Panc1 (cell line): ENCODE measurements at regions of chr15 and their contacts with region 1.

Region 1: DNA sequence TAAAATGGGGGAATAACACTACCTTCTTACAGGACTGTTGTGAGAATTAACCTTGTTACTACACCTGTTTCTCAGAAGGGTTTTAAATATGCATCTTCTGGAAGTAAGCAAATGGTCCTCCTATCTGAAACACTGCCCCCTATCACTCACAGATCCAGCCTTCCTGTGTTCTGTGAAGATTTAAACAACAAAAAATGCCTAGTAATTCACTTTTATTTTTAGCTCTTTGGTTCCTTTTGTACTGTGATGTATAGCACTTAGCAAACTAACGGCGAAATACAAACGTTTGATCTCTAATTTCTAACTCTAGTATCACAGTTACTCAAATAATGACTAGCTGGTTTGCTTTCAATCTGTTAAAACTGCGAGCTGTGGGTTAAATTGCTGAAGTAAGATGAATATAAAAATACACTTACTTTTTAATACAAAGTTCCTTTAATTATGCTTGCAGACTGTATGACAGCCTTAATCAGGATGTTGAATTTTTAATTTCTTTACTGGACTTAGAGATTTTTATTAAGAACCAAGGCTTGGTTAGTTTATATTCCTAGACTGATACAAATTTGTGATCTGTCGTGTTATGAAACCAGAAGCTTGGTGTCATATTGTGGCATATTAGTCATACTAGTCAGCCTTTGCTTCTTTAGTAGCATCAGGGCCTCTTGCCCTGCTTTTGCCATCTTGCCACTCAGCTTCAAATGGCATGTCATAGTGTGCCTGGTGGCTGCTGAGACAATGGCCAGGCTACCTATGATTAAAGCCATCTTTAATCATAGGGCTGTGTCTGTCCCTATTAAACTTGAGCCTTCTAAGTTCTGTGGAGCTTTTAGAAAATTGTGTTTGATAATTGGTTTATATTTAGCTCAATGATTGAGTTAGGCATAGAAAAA is 9.2 kb downstream of the EIF3J start:
- DNase-seq: no peak
- ATAC-seq: no peak
- H3K4me3 ChIP-seq: no peak overlapping the region
- H3K27ac ChIP-seq: no peak overlapping the region
- H3K4me1 ChIP-seq: 0 out of 2 replicates have a peak, but pooled peaks cover 6% of the 10 kb centered on the region
- H3K27me3 ChIP-seq: no peaks in the 10 kb centered on the region
- CTCF ChIP-seq: peak; percentile 59; the same call in 1 of the 2 replicates

Region 2: DNA sequence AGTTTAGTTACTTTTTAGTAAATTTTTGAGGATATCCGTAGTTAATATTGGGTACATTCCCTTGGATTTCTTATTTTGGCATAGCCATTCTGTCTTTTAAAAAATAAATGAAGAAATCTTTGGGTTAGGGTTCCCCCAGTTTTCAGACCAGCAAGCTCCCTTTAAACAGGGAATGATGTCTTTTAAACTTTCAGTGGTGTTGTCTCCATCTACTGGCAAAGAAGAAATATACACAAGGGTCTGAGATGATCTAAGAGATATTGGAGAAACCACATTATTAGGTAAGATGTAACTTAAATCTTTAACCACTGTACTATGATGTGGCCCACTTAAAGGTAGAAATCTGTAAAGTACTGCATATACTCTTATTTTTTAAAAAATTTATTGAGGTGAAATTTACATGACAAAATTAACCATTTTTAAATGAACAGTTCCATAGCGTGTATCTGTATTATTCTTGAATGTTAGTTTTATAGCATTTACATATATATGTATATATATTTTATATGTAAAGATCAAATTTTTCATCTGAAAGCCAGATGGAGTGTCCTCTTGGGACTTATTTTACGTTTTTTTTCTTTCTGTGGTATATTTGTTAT is 44.3 kb before region 1 on chr15:
- CTCF ChIA-PET with region 1: interaction called, 4 read pairs
- POLR2A ChIA-PET with region 1: interaction called, 19 read pairs
- in situ Hi-C with region 1: no loop called
- intact Hi-C with region 1: no loop called
- DNase-seq: no peak
- ATAC-seq: peak; percentile 68; the same call in 1 of the 2 replicates
- H3K4me3 ChIP-seq: no peak overlapping the region
- H3K27ac ChIP-seq: no peak overlapping the region
- H3K4me1 ChIP-seq: no peaks in the 10 kb centered on the region
- H3K27me3 ChIP-seq: no peaks in the 10 kb centered on the region
- CTCF ChIP-seq: peak; percentile 71; the same call in 1 of the 2 replicates